Activated CD8-positive, alpha-beta T cell treated with anti-CD3 and anti-CD28 coated beads, Interleukin-2, amount 10 ng/mL, durations not matched to agents 7 days and 5 days (primary cell): ENCODE measurements at regions of chr10 and their contacts with region 1.

Region 1: DNA sequence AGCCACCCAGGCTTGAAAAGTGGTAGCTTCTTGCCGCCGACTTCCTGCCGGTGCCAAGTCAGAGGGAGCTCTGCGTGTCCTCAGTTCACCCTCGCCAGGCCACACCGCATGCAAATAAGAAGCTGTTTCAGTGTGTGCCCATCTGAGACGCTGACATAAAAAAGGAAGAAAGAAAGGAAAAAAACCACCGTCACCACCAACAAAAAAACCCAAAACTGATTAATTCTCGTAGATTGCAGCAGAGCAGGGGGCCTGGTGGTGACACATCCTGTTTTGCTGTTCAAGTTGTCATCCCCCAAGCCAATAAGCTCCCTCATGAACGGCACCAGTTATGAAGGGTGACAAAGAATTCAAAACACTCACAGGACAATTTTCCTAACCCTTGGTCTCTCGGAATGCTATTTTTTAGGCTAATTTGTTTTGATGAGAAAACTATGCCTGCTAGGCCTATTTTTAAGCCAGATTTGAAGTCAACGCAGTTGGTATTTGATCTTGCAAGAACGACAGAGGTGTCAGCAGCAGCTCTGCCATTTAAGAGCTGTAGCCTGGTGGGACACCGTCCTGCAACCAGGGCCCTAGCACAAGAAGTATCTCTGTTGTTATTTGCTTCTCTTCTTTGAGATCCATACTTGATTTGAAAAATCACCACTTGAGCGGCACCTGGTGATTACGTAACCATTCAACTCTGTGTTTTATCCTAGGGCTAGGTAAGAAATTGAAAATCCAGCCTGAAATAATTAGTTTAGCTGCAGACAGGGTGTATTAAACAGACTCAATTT is 145.6 kb downstream of the PFKFB3 start:
- DNase-seq: peak; percentile 91
- ATAC-seq: peak; percentile 94
- H3K4me3 Mint-ChIP-seq: peak overlapping the region; percentile 63
- H3K27ac Mint-ChIP-seq: peak overlapping the region; percentile 98
- H3K4me1 Mint-ChIP-seq: peaks cover 66% of the 10 kb centered on the region
- H3K27me3 Mint-ChIP-seq: no peaks in the 10 kb centered on the region

Region 2: GRCh38 chr10:6269953-6270867 is 78.1 kb before region 1 on chr10:
- CTCF ChIA-PET with region 1: interaction called, 9 read pairs
- POLR2A ChIA-PET with region 1: interaction called, 17 read pairs
- DNase-seq: peak; percentile 90
- ATAC-seq: peak; percentile 83
- H3K4me3 Mint-ChIP-seq: peak overlapping the region; percentile 40
- H3K27ac Mint-ChIP-seq: peak overlapping the region; percentile 95
- H3K4me1 Mint-ChIP-seq: peaks cover 84% of the 10 kb centered on the region
- H3K27me3 Mint-ChIP-seq: no peaks in the 10 kb centered on the region

Region 3: DNA sequence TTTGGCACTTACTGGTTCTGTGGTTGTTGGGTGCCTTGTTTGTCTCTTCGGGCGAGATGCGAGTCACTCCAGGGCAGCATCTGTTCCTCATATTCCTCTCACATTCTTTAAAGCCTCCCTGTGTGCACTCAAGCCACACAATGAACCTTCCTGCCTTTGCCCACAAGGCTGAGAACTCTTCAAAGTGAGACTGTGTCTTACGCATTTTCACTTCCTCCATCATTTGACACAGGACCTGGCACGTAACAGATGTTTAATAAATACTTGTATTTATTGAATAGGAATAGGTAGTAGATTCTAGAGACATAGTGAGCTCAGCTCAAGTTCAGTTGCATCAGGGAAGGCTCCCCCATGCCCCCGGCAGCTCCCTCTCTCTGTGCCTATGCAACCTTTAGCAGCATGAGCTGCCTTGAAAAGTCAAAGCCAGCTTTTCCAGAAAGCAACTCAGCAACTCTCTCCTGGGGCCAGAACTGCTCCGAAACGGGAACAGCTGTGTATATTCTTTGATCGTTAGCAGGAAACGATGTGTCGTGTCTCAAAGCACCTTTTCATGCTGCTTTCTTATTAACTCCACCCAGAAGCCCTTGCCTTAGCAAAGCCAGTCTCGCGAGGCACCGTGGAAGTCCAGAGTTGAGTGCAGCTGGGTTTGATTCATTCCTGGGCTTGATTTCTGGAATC is 48.0 kb before region 1 on chr10:
- CTCF ChIA-PET with region 1: interaction called, 22 read pairs
- POLR2A ChIA-PET with region 1: interaction called, 10 read pairs
- DNase-seq: peak; percentile 58
- ATAC-seq: peak; percentile 77
- H3K4me3 Mint-ChIP-seq: peak overlapping the region; percentile 59
- H3K27ac Mint-ChIP-seq: peak overlapping the region; percentile 95
- H3K4me1 Mint-ChIP-seq: peaks cover 57% of the 10 kb centered on the region
- H3K27me3 Mint-ChIP-seq: no peaks in the 10 kb centered on the region

Region 4: DNA sequence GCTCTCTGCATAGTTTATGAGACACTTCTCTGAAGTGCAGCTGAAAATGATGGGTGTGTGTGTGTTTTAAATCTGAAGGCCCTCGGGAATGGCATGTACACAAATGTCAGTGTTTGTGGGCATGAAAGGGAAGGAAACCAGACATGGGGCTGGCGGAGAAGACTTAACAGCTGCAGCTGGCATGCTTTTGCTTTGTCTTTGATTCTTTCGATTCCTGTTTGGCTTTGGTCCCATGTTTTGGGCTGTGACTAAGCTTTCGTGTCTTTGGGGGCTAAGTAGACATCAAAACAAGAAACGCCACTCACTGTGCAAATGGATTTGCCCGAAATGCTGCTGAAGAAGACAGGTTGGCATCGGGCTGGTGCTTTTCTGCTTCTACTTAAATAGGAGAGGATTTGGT is 33.8 kb after region 1 on chr10:
- CTCF ChIA-PET with region 1: interaction called, 22 read pairs
- POLR2A ChIA-PET with region 1: interaction called, 17 read pairs
- DNase-seq: peak; percentile 51
- ATAC-seq: peak; percentile 75
- H3K4me3 Mint-ChIP-seq: peak overlapping the region; percentile 60
- H3K27ac Mint-ChIP-seq: peak overlapping the region; percentile 73
- H3K4me1 Mint-ChIP-seq: peaks cover 37% of the 10 kb centered on the region
- H3K27me3 Mint-ChIP-seq: no peaks in the 10 kb centered on the region